Right ventricle myocardium superior (tissue), 1 donor: ENCODE measurements at regions of chr17 and their contacts with region 1.

Region 1: DNA sequence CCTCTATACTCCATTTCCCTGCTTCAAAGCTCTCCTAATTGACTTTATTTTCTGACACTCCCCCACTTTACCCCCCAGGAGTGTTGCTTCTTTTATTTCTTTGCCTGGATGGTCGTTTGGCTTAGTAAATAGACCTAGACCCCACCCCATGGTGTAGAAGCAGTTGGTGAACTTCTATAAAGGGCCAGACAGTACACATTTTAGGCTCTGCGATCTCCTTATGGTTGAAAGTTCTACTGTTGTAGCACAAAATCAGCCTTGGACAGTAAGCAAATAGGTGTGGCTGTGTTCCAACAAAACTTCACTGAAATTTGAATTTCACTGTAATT is 31.9 kb downstream of the ZNF287 start:
- DNase-seq: no peak
- ATAC-seq: no peak

Region 2: GRCh38 chr17:16589097-16589969 is 52.2 kb after region 1 on chr17:
- intact Hi-C with region 1: loop called (anchors 5 kb)
- DNase-seq: peak; percentile 97
- ATAC-seq: peak; percentile 95

Region 3: DNA sequence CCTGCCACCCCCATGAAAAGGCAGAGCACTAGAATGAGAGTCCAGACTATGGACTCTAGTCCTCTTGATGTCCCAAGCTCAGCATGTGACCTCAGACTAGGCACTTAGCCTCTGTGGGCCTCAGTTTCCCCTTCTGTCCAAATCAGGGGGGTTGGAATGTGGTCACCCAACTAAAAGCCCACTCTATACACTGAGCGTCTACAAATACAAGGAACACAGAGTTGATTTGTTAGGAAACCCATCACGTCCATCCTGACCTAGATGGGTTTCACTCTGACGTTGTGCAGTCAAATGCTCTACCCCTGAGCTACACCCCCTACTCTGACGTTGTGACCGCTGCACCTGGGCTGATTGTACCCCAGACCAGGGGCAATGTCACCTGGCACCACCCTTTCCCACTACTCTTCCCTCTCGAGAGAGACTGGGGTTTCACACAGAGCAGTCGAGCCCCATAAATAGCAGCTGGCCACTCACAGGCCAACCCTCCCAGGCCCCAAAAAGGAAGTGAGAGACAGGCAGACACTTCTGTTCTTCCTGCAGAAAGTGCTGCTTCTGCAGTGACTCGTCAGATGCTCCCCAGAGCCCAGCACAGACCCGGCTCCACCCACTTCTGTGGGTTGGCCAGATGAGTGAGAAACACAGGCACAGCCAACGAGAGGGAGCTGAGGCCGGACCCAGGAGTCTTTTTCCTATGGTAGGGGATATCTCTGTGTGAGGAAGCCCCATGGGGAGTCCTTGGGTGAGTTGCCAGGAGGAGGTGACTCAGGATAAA is 450.9 kb after region 1 on chr17:
- intact Hi-C with region 1: loop called (anchors 10 kb)
- DNase-seq: peak; percentile 84
- ATAC-seq: peak; percentile 84